CD4-positive, alpha-beta memory T cell (primary cell): ENCODE measurements at regions of chr11 and their contacts with region 1.

Region 1: GRCh38 chr11:66069715-66070603 is at the start of gene PACS1:
- DNase-seq: peak; percentile 71 to 81 (median 78)
- H3K4me3 ChIP-seq: peak within 1 kb of the TSS; percentile 59 to 98
- H3K4me3 Mint-ChIP-seq: peak within 1 kb of the TSS; percentile 91 to 98 (median 96)
- H3K27ac ChIP-seq: peak within 1 kb of the TSS; percentile 77
- H3K27ac Mint-ChIP-seq: peak within 1 kb of the TSS; percentile 93 to 99 (median 95)
- H3K4me1 ChIP-seq: peaks cover 59% of the 10 kb centered on the region
- H3K4me1 Mint-ChIP-seq: peaks cover 44 to 69% (median 54%) of the 10 kb centered on the region in 4 donors
- H3K27me3 ChIP-seq: no peaks in the 10 kb centered on the region
- H3K27me3 Mint-ChIP-seq: no peaks in the 10 kb centered on the region
- total RNA-seq, gene PACS1: 251 to 262 TPM

Region 2: GRCh38 chr11:66045177-66045639 is 24.8 kb before region 1 on chr11:
- CTCF ChIA-PET with region 1: interaction called, 29 read pairs
- POLR2A ChIA-PET with region 1: interaction called, 66 read pairs
- intact Hi-C with region 1: no loop called
- DNase-seq: peak; percentile 78 to 86 (median 81)
- H3K4me3 ChIP-seq: no peak overlapping the region
- H3K4me3 Mint-ChIP-seq: peak overlapping the region in 2 of 8 donors; percentile 32 to 55
- H3K27ac ChIP-seq: no peak overlapping the region
- H3K27ac Mint-ChIP-seq: peak overlapping the region in 2 of 7 donors; percentile 9 to 67
- H3K4me1 ChIP-seq: peaks cover 12% of the 10 kb centered on the region
- H3K4me1 Mint-ChIP-seq: peaks cover 5 to 16% (median 9%) of the 10 kb centered on the region in 4 donors
- H3K27me3 ChIP-seq: no peaks in the 10 kb centered on the region
- H3K27me3 Mint-ChIP-seq: peaks cover 0 to 2% of the 10 kb centered on the region in 2 donors

Region 3: DNA sequence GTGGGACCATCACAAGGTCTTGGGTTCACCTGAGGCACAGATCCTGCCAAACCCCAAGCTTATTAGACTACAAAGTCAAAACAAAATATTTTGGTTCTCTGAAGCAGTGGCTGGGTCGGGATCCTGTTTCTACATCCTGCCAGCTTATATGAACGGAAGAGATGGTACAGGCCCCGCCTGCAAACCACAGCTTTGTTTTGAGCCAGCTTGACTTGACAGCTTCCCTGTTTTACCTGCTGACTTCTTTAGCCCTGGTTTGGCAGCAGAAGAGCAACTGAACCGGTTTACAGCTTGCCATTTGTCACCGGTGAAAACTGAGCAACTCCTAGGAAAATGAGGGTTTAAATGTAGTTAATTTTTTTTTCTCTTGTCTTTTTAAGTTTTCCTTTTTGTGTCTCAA is 11.5 kb after region 1 on chr11:
- CTCF ChIA-PET with region 1: interaction called, 146 read pairs
- POLR2A ChIA-PET with region 1: interaction called, 214 read pairs
- intact Hi-C with region 1: loop called (anchors 1 kb)
- DNase-seq: peak; percentile 79 to 93 (median 83)
- H3K4me3 ChIP-seq: peak overlapping the region in 1 of 2 donors; percentile 35
- H3K4me3 Mint-ChIP-seq: peak overlapping the region; percentile 88 to 98 (median 90)
- H3K27ac ChIP-seq: peak overlapping the region; percentile 66
- H3K27ac Mint-ChIP-seq: peak overlapping the region; percentile 93 to 100 (median 99)
- H3K4me1 ChIP-seq: peaks cover 94% of the 10 kb centered on the region
- H3K4me1 Mint-ChIP-seq: peaks cover 65 to 92% (median 81%) of the 10 kb centered on the region in 4 donors
- H3K27me3 ChIP-seq: no peaks in the 10 kb centered on the region
- H3K27me3 Mint-ChIP-seq: no peaks in the 10 kb centered on the region

Region 4: DNA sequence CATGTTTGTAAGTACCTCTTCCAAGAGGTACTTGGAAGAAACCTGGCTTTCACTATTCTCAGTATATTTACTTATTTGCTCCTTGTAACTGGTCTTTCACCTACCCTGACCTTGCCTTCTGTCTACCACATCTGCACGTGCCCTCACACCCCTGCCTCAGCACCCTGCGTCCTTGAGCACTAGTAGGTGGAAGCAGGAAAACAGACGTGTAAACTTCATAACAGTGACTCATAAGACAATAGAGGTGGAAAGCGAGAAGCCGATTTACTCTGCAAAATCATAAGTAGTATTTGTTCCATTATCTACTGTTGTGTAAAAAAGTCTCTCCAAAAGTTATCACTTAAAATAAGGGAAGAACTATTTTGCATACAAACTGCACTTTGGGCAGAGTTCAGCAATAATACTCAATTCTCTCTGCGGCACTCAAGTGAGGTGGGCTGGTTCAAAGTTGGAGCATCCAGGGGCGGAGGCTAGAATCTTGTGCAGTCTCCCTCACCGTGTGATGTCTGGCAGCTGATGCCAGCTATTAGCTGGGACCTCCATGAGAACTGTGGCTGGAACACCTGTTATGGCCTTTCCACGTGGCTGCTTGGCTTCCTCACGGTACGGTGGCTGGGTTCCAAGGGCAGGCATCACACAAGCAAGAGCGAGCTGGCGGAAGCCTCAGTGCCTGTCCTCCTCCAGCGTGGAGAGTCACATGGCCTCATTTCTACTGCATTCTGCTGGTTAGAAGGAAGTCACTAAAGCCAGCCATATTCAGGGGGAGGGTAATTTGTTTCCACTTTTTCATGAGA is 30.5 kb after region 1 on chr11:
- CTCF ChIA-PET with region 1: interaction called, 9 read pairs
- POLR2A ChIA-PET with region 1: interaction called, 56 read pairs
- intact Hi-C with region 1: loop called (anchors 1 kb)
- DNase-seq: peak; percentile 72 to 89 (median 80)
- H3K4me3 ChIP-seq: peak overlapping the region; percentile 32 to 46
- H3K4me3 Mint-ChIP-seq: peak overlapping the region; percentile 75 to 87 (median 80)
- H3K27ac ChIP-seq: peak overlapping the region; percentile 57
- H3K27ac Mint-ChIP-seq: peak overlapping the region; percentile 76 to 98 (median 96)
- H3K4me1 ChIP-seq: peaks cover 76% of the 10 kb centered on the region
- H3K4me1 Mint-ChIP-seq: peaks cover 51 to 79% (median 60%) of the 10 kb centered on the region in 4 donors
- H3K27me3 ChIP-seq: no peaks in the 10 kb centered on the region
- H3K27me3 Mint-ChIP-seq: no peaks in the 10 kb centered on the region

Region 5: GRCh38 chr11:66126808-66127555 is 57.0 kb after region 1 on chr11:
- CTCF ChIA-PET with region 1: interaction called, 231 read pairs
- POLR2A ChIA-PET with region 1: interaction called, 185 read pairs
- intact Hi-C with region 1: loop called (anchors 2 kb)
- DNase-seq: peak; percentile 57 to 80 (median 64)
- H3K4me3 ChIP-seq: peak overlapping the region; percentile 2 to 14
- H3K4me3 Mint-ChIP-seq: peak overlapping the region; percentile 53 to 90 (median 78)
- H3K27ac ChIP-seq: peak overlapping the region; percentile 49
- H3K27ac Mint-ChIP-seq: peak overlapping the region; percentile 92 to 98 (median 95)
- H3K4me1 ChIP-seq: peaks cover 74% of the 10 kb centered on the region
- H3K4me1 Mint-ChIP-seq: peaks cover 65 to 81% (median 72%) of the 10 kb centered on the region in 4 donors
- H3K27me3 ChIP-seq: no peaks in the 10 kb centered on the region
- H3K27me3 Mint-ChIP-seq: no peaks in the 10 kb centered on the region

Region 6: GRCh38 chr11:66142370-66143263 is 72.7 kb after region 1 on chr11:
- CTCF ChIA-PET with region 1: interaction called, 178 read pairs
- POLR2A ChIA-PET with region 1: interaction called, 55 read pairs
- intact Hi-C with region 1: no loop called
- DNase-seq: no peak
- H3K4me3 ChIP-seq: no peak overlapping the region
- H3K4me3 Mint-ChIP-seq: no peak overlapping the region
- H3K27ac ChIP-seq: no peak overlapping the region
- H3K27ac Mint-ChIP-seq: no peak overlapping the region
- H3K4me1 ChIP-seq: peaks cover 43% of the 10 kb centered on the region
- H3K4me1 Mint-ChIP-seq: peaks cover 24 to 60% (median 48%) of the 10 kb centered on the region in 4 donors
- H3K27me3 ChIP-seq: no peaks in the 10 kb centered on the region
- H3K27me3 Mint-ChIP-seq: no peaks in the 10 kb centered on the region